SK-N-SH (cell line): ENCODE measurements at regions of chr17 and their contacts with region 1.

Region 1: DNA sequence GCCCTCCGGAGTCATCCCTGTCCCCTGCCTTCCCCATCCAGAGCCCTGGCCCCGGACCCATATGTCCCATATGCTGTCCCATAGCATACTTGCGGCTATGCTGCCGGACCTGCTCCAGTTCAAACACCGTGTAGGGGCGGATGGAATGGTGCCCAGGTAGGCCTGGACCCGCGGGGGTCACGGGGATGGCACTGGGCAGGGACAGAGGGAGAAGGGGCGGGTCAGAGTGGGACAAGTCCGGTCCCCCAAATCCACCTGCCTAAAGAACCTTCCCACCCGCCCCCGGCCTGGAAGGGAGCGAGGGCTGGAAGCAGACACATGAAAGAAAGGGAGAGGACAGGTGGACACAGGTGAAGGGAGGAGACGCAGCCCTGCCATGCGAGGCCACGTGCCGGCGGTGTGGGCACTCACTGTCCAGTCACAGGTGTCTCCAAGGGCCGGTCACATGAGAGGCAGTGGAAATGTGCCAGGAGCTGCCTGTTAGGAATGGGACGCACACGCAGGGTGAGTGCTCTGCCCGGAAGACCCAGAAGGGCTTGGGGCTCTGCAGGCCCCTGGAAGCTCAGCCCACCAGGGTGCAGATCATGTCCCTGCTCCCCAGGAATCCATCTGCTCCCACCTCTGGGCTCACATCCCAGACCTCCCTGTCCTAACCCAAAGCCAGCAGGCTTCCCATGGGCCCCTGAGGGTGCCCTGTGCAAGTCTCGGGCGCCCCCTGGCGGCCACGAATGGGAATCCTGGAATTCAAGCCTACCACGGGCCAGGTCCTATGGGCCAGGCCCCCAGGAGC is 14.0 kb downstream of the UBALD2 start:
- DNase-seq: peak; percentile 99
- H3K4me3 ChIP-seq: no peak overlapping the region; a peak in 1 of 4 replicates
- H3K27ac ChIP-seq: no peak overlapping the region
- H3K4me1 ChIP-seq: peaks cover 5 to 10% of the 10 kb centered on the region in 2 experiments; a peak in 1 of 4 replicates
- H3K27me3 ChIP-seq: no peaks in the 10 kb centered on the region
- CTCF ChIP-seq: peak; percentile 99
- EP300 ChIP-seq: no peak
- RAD21 ChIP-seq: peak; percentile 97

Region 2: DNA sequence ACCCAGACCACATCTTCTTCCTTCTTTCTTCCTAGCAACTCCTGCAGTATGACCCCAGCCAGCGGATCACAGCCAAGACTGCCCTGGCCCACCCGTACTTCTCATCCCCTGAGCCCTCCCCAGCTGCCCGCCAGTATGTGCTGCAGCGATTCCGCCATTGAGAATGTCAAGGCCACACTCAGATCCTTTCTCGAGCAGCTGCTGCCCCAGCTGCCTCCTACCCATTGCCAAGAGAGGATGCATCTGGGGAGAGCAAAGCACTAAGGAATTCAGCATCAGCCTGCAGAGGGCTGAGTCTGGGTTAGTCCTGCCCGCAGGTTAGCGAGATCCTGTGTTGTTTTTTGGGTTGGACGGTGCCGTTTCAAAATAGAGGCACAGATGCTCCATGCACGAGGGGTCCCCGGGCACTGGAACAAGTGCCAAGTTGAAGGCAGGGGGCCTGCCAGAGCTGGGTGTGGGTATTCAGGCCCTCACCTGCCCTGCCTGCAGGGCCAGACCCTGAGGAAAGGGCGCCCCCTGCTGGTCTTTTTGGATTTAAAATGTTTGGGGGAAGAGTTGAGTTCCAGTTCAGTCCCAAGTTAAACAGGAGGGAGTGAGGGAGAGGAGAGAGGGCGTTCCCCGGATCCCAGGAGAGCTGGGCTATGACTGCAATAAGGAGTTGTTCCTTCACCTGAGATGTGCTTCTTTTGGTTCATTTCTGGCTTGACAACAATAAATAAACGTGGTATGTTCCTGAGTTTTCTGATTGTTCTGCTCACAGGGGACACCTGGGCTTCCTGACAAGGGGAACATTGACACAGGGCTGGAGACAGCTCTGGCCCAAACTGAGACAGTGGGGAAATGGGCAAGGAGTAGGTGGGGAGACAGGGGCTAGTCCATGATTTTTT is 273.6 kb before region 1 on chr17:
- CTCF ChIA-PET with region 1: interaction called, 23 read pairs
- POLR2A ChIA-PET with region 1: no interaction called
- DNase-seq: peak; percentile 92
- H3K4me3 ChIP-seq: no peak overlapping the region; a peak in 1 of 4 replicates
- H3K27ac ChIP-seq: peak overlapping the region in 1 of 2 experiments; percentile 38; a peak in 1 of 4 replicates
- H3K4me1 ChIP-seq: peaks cover 0 to 10% of the 10 kb centered on the region in 2 experiments; a peak in 2 of 4 replicates
- H3K27me3 ChIP-seq: no peaks in the 10 kb centered on the region
- CTCF ChIP-seq: peak; percentile 94
- EP300 ChIP-seq: no peak
- RAD21 ChIP-seq: peak; percentile 83

Region 3: DNA sequence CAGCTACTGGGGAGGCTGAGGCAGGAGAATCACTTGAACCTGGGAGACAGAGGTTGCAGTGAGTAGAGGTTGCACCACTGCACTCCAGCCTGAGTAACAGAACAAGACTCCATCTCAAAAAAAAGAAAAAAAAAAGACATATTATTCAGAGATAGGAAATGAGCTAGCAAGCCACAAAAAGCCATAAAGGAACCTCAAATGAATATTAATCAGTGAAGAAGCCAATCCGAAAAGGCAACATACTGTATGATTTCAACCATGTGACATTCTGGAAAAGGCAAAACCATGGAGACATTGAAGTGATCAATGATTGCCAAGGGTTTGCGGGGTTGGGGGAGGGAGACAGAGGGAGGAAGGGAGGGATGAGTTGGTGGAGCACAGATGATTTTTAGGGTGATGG is 167.2 kb before region 1 on chr17:
- CTCF ChIA-PET with region 1: interaction called, 53 read pairs
- POLR2A ChIA-PET with region 1: no interaction called
- DNase-seq: no peak
- H3K4me3 ChIP-seq: no peak overlapping the region
- H3K27ac ChIP-seq: no peak overlapping the region
- H3K4me1 ChIP-seq: no peaks in the 10 kb centered on the region
- H3K27me3 ChIP-seq: no peaks in the 10 kb centered on the region; the same call in 1 of the 2 replicates
- CTCF ChIP-seq: no peak
- EP300 ChIP-seq: no peak
- RAD21 ChIP-seq: no peak

Region 4: DNA sequence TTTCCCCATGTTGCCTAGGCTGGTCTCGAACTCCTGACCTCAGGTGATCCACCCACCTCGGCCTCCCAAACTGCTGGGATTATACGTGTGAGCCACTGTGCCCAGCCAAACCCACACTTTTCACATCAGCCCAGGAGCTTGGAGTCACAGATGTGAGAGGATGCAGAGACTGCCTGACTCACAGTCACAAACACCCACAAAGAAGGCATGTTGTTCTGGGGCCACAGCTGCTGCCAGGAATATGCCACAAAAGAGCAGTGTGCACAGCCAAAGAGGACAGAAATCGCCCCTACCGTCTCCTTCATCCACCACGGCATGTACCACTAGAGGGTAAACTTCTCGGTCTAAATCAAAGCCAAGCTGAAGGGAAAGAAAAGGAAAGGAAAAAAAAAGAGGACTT is 113.0 kb before region 1 on chr17:
- CTCF ChIA-PET with region 1: interaction called, 22 read pairs
- POLR2A ChIA-PET with region 1: no interaction called
- DNase-seq: no peak
- H3K4me3 ChIP-seq: no peak overlapping the region
- H3K27ac ChIP-seq: no peak overlapping the region
- H3K4me1 ChIP-seq: no peaks in the 10 kb centered on the region
- H3K27me3 ChIP-seq: no peaks in the 10 kb centered on the region
- CTCF ChIP-seq: no peak
- EP300 ChIP-seq: no peak
- RAD21 ChIP-seq: no peak

Region 5: GRCh38 chr17:76217081-76217480 is 62.1 kb before region 1 on chr17:
- CTCF ChIA-PET with region 1: interaction called, 14 read pairs
- POLR2A ChIA-PET with region 1: no interaction called
- DNase-seq: no peak
- H3K4me3 ChIP-seq: no peak overlapping the region
- H3K27ac ChIP-seq: no peak overlapping the region
- H3K4me1 ChIP-seq: no peaks in the 10 kb centered on the region
- H3K27me3 ChIP-seq: no peaks in the 10 kb centered on the region
- CTCF ChIP-seq: no peak
- EP300 ChIP-seq: no peak
- RAD21 ChIP-seq: no peak

Region 6: GRCh38 chr17:76296186-76296585 is 17.0 kb after region 1 on chr17:
- CTCF ChIA-PET with region 1: interaction called, 181 read pairs
- POLR2A ChIA-PET with region 1: no interaction called
- DNase-seq: no peak
- H3K4me3 ChIP-seq: no peak overlapping the region
- H3K27ac ChIP-seq: no peak overlapping the region
- H3K4me1 ChIP-seq: no peaks in the 10 kb centered on the region
- H3K27me3 ChIP-seq: no peaks in the 10 kb centered on the region
- CTCF ChIP-seq: no peak
- EP300 ChIP-seq: no peak
- RAD21 ChIP-seq: no peak